ENCODE measurements at regions of chr2 and their contacts with region 1.

Region 1: GRCh38 chr2:39216346-39217191 is 27.2 kb downstream of the CDKL4 start:
- DNase-seq: peak; percentile 28 to 93 (median 78)
- ATAC-seq: peak; percentile 93 to 97
- H3K4me3 Mint-ChIP-seq: peak overlapping the region; percentile 25 to 77 (median 58)
- H3K27ac Mint-ChIP-seq: peak overlapping the region; percentile 43 to 94 (median 73)
- H3K4me1 Mint-ChIP-seq: peaks cover 18 to 50% (median 43%) of the 10 kb centered on the region in 4 donors
- H3K27me3 Mint-ChIP-seq: no peaks in the 10 kb centered on the region

Region 2: GRCh38 chr2:39202639-39203369 is 13.8 kb before region 1 on chr2:
- POLR2A ChIA-PET with region 1: no interaction called
- DNase-seq: no peak
- ATAC-seq: no peak
- H3K4me3 Mint-ChIP-seq: no peak overlapping the region
- H3K27ac Mint-ChIP-seq: peak overlapping the region in 1 of 10 donors; percentile 10
- H3K4me1 Mint-ChIP-seq: peaks cover 4 to 7% (median 5%) of the 10 kb centered on the region in 4 donors
- H3K27me3 Mint-ChIP-seq: no peaks in the 10 kb centered on the region

Region 3: GRCh38 chr2:39227628-39228412 is 11.3 kb after region 1 on chr2:
- POLR2A ChIA-PET with region 1: interaction called, 20 read pairs
- DNase-seq: peak; percentile 57 to 87 (median 79)
- ATAC-seq: peak; percentile 88
- H3K4me3 Mint-ChIP-seq: peak overlapping the region; percentile 69 to 88 (median 75)
- H3K27ac Mint-ChIP-seq: peak overlapping the region in 9 of 10 donors; percentile 23 to 83 (median 65)
- H3K4me1 Mint-ChIP-seq: peaks cover 9 to 23% (median 17%) of the 10 kb centered on the region in 4 donors
- H3K27me3 Mint-ChIP-seq: peaks cover 0 to 2% (median 0%) of the 10 kb centered on the region in 5 donors

Measured in naive thymus-derived CD8-positive, alpha-beta T cell (primary cell).